Naive thymus-derived CD4-positive, alpha-beta T cell (primary cell): ENCODE measurements at regions of chr10 and their contacts with region 1.

Region 1: GRCh38 chr10:5776136-5776880 is 36.9 kb downstream of the GDI2 start:
- DNase-seq: no peak
- ATAC-seq: peak; percentile 5
- H3K4me3 ChIP-seq: peak overlapping the region; percentile 32
- H3K4me3 Mint-ChIP-seq: peak overlapping the region; percentile 59 to 82 (median 76)
- H3K27ac ChIP-seq: peak overlapping the region; percentile 72
- H3K27ac Mint-ChIP-seq: peak overlapping the region; percentile 83 to 95 (median 94)
- H3K4me1 ChIP-seq: peaks cover 15 to 24% of the 10 kb centered on the region in 2 donors
- H3K4me1 Mint-ChIP-seq: peaks cover 23 to 75% (median 62%) of the 10 kb centered on the region in 7 donors
- H3K27me3 ChIP-seq: no peaks in the 10 kb centered on the region
- H3K27me3 Mint-ChIP-seq: no peaks in the 10 kb centered on the region

Region 2: DNA sequence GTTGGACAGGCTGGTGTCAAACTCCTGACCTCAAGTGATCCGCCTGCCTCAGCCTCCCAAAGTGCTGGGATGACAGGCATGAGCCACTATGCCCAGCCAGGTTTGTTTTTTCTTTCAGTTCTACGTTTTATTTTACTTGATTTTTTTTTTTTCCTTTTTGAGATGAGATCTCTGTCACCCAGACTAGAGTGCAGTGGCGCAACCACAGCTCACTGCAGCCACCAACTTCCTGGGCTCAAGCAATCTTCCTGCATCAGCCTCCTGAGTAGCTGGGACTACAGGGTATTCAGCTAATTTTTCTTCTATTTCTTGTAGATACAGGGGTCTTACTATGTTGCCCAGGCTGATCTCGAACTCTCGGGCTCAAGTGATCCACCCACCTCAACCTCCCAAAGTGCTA is 12.7 kb after region 1 on chr10:
- CTCF ChIA-PET with region 1: interaction called, 3 read pairs
- POLR2A ChIA-PET with region 1: no interaction called
- intact Hi-C with region 1: loop called in 1 of 2 experiments (anchors 2 kb)
- DNase-seq: peak in 3 of 9 donors; percentile 7 to 32 (median 23)
- ATAC-seq: peak; percentile 38
- H3K4me3 ChIP-seq: no peak overlapping the region
- H3K4me3 Mint-ChIP-seq: peak overlapping the region in 5 of 10 donors; percentile 20 to 55 (median 54)
- H3K27ac ChIP-seq: peak overlapping the region; percentile 52
- H3K27ac Mint-ChIP-seq: peak overlapping the region in 8 of 9 donors; percentile 22 to 88 (median 76)
- H3K4me1 ChIP-seq: no peaks in the 10 kb centered on the region
- H3K4me1 Mint-ChIP-seq: peaks cover 4 to 35% (median 24%) of the 10 kb centered on the region in 7 donors
- H3K27me3 ChIP-seq: no peaks in the 10 kb centered on the region
- H3K27me3 Mint-ChIP-seq: no peaks in the 10 kb centered on the region

Region 3: GRCh38 chr10:5873515-5873995 is 97.2 kb after region 1 on chr10:
- CTCF ChIA-PET with region 1: no interaction called
- POLR2A ChIA-PET with region 1: no interaction called
- intact Hi-C with region 1: loop called (anchors 1 kb)
- DNase-seq: peak; percentile 42 to 76 (median 67)
- ATAC-seq: peak; percentile 96
- H3K4me3 ChIP-seq: no peak overlapping the region
- H3K4me3 Mint-ChIP-seq: peak overlapping the region in 8 of 10 donors; percentile 46 to 76 (median 58)
- H3K27ac ChIP-seq: no peak overlapping the region
- H3K27ac Mint-ChIP-seq: peak overlapping the region in 2 of 9 donors; percentile 60 to 74
- H3K4me1 ChIP-seq: no peaks in the 10 kb centered on the region
- H3K4me1 Mint-ChIP-seq: peaks cover 2 to 10% (median 5%) of the 10 kb centered on the region in 7 donors
- H3K27me3 ChIP-seq: no peaks in the 10 kb centered on the region
- H3K27me3 Mint-ChIP-seq: peaks cover 0 to 4% (median 0%) of the 10 kb centered on the region in 5 donors